Activated naive CD4-positive, alpha-beta T cell treated with anti-CD3 and anti-CD28 coated beads for 36 hours (primary cell): ENCODE measurements at regions of chr1 and their contacts with region 1.

Region 1: GRCh38 chr1:8848663-8849386 is 29.7 kb downstream of the ENO1 start:
- DNase-seq: peak; percentile 82
- H3K4me3 Mint-ChIP-seq: no peak overlapping the region
- H3K27ac Mint-ChIP-seq: no peak overlapping the region
- H3K4me1 Mint-ChIP-seq: peaks cover 4% of the 10 kb centered on the region
- H3K27me3 Mint-ChIP-seq: no peaks in the 10 kb centered on the region

Region 2: GRCh38 chr1:8554956-8555534 is 293.8 kb before region 1 on chr1:
- CTCF ChIA-PET with region 1: interaction called, 11 read pairs
- intact Hi-C with region 1: no loop called
- DNase-seq: peak; percentile 17
- H3K4me3 Mint-ChIP-seq: no peak overlapping the region
- H3K27ac Mint-ChIP-seq: no peak overlapping the region
- H3K4me1 Mint-ChIP-seq: peaks cover 37% of the 10 kb centered on the region
- H3K27me3 Mint-ChIP-seq: no peaks in the 10 kb centered on the region

Region 3: GRCh38 chr1:8687039-8687438 is 161.8 kb before region 1 on chr1:
- CTCF ChIA-PET with region 1: no interaction called
- intact Hi-C with region 1: no loop called
- DNase-seq: peak; percentile 46
- H3K4me3 Mint-ChIP-seq: no peak overlapping the region
- H3K27ac Mint-ChIP-seq: no peak overlapping the region
- H3K4me1 Mint-ChIP-seq: peaks cover 32% of the 10 kb centered on the region
- H3K27me3 Mint-ChIP-seq: no peaks in the 10 kb centered on the region

Region 4: GRCh38 chr1:8718850-8719361 is 129.9 kb before region 1 on chr1:
- CTCF ChIA-PET with region 1: interaction called, 26 read pairs
- intact Hi-C with region 1: loop called (anchors 2 kb)
- DNase-seq: peak; percentile 25
- H3K4me3 Mint-ChIP-seq: no peak overlapping the region
- H3K27ac Mint-ChIP-seq: no peak overlapping the region
- H3K4me1 Mint-ChIP-seq: peaks cover 17% of the 10 kb centered on the region
- H3K27me3 Mint-ChIP-seq: no peaks in the 10 kb centered on the region

Region 5: DNA sequence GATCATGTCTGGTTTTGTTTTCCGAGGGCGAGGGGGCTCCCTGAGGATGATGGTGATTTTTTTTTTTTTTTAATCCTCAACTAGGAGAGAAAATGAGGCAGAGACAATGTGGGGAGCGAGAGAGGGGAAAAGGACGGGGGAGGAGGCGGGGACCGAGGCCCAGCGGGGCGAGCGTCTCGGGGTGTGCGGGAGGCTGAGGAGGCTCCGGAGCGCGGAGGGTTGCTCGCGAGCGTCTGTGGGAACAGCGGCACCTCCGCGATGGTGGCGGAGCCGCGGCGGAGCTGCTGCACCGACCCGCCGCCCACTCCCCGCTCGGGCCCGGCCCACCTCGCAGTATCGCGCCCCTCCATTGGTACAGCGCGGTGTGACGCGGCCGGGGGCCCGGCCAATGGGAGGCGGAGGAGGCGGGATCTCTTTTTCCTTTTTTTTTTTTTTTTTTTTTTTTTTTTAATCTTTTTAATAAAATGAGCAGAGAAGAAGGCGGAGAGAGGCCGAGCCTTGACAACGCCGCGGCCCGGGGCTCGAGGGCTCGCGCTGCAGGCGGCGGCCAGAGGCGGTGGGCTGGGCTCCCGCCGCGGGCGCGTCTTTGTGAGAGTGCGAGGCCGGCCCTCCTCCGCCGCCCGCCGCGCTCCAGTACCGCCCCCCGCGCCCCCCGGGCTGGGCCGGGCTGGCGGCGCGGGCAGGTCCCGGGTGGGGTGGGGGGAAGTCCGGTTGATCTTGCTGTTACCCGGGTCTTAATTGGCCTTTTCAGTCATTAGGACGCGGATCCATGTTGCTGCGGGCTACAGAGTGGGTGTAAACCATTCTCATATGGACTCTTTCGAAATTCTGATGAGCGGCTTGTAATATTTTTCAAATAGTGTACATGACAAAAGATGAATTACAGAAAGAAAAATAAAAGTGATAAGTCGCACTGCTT is 31.2 kb before region 1 on chr1 and contains the start of gene RERE:
- CTCF ChIA-PET with region 1: interaction called, 11 read pairs
- intact Hi-C with region 1: no loop called
- DNase-seq: peak; percentile 94
- H3K4me3 Mint-ChIP-seq: peak within 1 kb of the TSS; percentile 86
- H3K27ac Mint-ChIP-seq: peak within 1 kb of the TSS; percentile 93
- H3K4me1 Mint-ChIP-seq: peaks cover 45% of the 10 kb centered on the region
- H3K27me3 Mint-ChIP-seq: no peaks in the 10 kb centered on the region
- total RNA-seq, gene RERE: 46.4 to 47.6 TPM

Region 6: DNA sequence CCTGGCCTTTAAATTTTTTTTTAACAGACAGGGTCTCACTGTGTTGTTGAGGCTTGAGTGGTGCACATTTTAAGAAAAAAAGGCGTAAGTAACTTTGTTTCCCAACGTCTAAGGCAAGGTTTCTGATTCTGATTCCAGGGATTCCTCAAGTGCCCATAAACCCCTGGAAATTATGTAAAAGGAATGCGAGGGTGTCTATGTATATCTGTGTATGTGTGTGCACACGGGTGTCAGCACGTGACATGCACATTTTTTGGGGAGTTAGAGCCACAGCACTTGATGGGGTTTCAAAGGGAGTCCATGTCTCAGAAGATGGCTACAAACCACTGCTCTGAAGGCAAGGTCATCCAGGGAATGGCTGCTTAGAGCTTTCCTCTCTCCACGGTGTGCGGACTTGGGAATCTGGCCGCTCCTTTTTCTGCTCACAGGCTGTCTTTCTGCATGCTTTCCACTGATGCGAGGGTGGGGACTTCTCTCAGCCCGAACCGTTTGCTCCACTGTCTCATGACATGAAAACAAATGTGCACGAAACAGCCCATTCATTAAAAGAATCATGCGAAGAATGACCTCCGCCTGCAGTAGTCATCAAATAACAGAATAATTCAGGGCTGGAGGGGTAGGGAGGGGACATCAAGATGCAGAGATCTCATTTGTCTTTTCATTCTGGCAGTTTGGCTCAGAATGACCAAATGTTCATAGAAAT is 12.7 kb before region 1 on chr1:
- CTCF ChIA-PET with region 1: interaction called, 24 read pairs
- intact Hi-C with region 1: no loop called
- DNase-seq: no peak
- H3K4me3 Mint-ChIP-seq: no peak overlapping the region
- H3K27ac Mint-ChIP-seq: no peak overlapping the region
- H3K4me1 Mint-ChIP-seq: no peaks in the 10 kb centered on the region
- H3K27me3 Mint-ChIP-seq: no peaks in the 10 kb centered on the region